ENCODE measurements at regions of chr9 and their contacts with region 1.

Region 1: DNA sequence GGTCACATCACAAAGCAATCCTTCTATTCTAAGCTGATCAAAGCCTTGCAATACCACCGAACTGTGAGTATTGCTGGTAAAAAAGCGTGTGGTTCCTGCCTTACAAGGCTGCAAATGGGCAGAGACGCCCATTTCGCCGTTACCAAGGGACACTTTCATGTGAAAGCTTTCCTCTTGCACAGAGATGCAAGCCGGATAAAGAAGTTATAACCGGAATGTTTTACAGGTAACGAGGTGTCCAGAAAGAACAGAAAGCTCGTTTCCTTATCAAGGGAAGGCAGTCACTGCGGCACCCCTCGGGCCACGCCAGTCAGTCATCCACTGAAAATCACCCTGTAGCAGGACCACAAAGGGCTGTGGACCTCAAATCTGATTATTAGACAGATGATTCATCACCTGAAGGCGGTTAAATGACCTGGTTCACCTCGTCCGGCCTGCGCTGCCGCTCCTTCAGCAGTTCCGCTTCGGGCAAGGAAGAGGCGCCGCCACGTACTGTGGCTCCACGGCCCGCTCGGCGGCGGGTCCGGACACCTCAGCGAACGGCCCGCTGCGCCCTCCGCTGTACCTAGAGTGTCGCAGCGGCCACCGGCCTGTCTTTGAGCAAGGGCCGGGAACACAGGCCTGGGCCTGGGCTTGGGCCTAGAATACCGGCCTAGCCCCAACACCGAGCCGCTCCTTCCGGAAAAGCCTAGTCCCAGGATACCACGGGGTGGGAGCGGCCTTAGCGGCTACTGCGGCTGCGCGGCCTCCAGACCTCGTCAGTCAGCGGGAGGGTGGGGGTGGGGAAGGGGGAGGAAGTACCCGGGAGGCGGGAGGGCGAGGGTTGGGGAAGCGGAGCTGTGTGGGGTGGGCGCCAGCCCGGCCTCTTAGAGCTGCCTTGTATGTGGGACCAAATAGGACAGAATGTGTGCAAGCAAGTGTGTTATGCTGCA is at the start of gene KLHL9:
- DNase-seq: peak; percentile 96
- ATAC-seq: peak; percentile 100
- total RNA-seq, gene KLHL9: 13.0 to 14.1 TPM

Region 2: DNA sequence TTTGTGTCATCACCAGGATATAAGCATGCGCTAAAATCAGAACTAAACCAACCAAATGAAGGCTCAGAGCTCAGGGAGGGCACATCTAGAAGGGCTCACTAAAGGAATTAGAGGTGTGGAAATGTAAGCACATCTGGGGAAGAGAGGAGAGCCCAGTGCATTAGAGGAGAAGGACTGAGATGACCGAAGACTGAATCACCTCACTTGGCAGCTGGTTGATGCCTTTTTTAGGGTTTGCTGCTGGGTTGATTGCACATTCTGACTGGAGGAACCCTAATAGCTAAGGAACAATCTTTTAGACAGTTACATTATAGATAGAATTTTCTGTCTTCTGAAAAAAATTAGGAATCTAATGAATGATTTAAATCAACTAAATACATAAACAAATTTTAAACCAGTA is 160.3 kb before region 1 on chr9:
- intact Hi-C with region 1: no loop called
- DNase-seq: no peak
- ATAC-seq: no peak

Region 3: GRCh38 chr9:21286659-21287058 is 48.3 kb before region 1 on chr9:
- intact Hi-C with region 1: no loop called
- DNase-seq: no peak
- ATAC-seq: no peak

Region 4: GRCh38 chr9:21395778-21396717 is 61.1 kb after region 1 on chr9:
- intact Hi-C with region 1: loop called (anchors 5 to 10 kb)
- DNase-seq: peak; percentile 61
- ATAC-seq: peak; percentile 65 to 72

Region 5: GRCh38 chr9:21802195-21803000 is 467.4 kb after region 1 on chr9 and contains the start of gene MTAP:
- intact Hi-C with region 1: loop called in 1 of 2 experiments (anchors 2 kb)
- DNase-seq: peak; percentile 95
- ATAC-seq: peak; percentile 98 to 99
- total RNA-seq, gene MTAP: 19.6 to 21.3 TPM

Measured in left cardiac atrium (tissue), 4 donors.